Activated CD4-positive, alpha-beta memory T cell treated with anti-CD3 and anti-CD28 coated beads, Interleukin-2, amount 10 ng/mL, durations not matched to agents 7 days and 5 days (primary cell): ENCODE measurements at regions of chr19 and their contacts with region 1.

Region 1: DNA sequence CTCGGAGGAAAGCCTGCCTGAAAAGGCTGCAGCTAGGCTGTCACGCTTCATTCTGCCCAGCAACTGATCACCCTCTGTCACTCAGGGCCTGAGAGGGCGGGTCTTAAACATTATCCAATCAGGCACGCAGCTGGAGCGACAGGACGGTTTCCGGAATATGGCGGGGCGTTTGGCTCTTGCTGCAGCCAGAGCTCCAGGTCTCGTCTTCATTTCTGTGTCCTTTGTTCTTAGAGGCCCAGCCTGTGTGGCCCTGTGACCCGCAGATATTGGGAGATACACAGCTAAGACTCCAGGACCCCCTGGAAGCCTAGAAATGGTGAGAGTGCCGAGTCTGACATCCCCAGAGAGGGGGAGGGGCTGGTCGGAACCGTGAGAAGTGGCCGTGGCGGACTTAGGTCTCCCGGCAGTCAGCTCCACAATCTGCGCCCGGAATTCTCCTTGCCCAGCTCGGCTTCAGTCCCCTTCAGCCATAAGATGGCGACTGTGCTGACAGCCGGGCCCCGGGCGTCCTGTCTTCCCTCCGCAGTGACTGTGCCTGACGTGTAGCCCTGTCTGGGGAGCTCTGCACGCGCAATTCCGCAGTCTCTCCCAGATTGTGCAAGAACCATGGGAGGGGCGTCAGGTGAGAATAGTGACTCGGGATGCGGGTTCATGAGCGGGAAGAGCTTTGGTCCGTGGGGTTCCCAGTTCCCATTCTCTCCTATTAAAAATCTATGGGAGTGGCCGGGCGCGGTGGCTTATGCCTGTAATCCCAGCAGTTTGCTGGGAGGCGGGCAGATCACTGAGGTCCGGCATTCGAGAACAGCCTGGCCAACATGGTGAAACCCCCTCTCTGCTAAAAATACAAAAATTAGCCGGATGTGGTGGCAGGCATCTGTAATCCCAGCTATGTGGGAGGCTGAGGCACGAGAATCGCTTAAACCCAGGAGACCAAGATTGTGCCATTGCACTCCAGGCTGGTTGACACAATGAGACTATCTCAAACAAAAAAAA is at the start of gene ZNF429:
- DNase-seq: peak; percentile 93
- H3K4me3 Mint-ChIP-seq: peak within 1 kb of the TSS; percentile 100
- H3K27ac Mint-ChIP-seq: peak within 1 kb of the TSS; percentile 96
- H3K4me1 Mint-ChIP-seq: peaks cover 25% of the 10 kb centered on the region
- H3K27me3 Mint-ChIP-seq: no peaks in the 10 kb centered on the region
- total RNA-seq, gene ZNF429: 8.0 to 8.3 TPM

Region 2: GRCh38 chr19:20423381-20424197 is 1082.2 kb before region 1 on chr19:
- CTCF ChIA-PET with region 1: no interaction called
- POLR2A ChIA-PET with region 1: interaction called, 20 read pairs
- DNase-seq: peak; percentile 42
- H3K4me3 Mint-ChIP-seq: peak overlapping the region; percentile 97
- H3K27ac Mint-ChIP-seq: peak overlapping the region; percentile 97
- H3K4me1 Mint-ChIP-seq: peaks cover 13% of the 10 kb centered on the region
- H3K27me3 Mint-ChIP-seq: no peaks in the 10 kb centered on the region

Region 3: DNA sequence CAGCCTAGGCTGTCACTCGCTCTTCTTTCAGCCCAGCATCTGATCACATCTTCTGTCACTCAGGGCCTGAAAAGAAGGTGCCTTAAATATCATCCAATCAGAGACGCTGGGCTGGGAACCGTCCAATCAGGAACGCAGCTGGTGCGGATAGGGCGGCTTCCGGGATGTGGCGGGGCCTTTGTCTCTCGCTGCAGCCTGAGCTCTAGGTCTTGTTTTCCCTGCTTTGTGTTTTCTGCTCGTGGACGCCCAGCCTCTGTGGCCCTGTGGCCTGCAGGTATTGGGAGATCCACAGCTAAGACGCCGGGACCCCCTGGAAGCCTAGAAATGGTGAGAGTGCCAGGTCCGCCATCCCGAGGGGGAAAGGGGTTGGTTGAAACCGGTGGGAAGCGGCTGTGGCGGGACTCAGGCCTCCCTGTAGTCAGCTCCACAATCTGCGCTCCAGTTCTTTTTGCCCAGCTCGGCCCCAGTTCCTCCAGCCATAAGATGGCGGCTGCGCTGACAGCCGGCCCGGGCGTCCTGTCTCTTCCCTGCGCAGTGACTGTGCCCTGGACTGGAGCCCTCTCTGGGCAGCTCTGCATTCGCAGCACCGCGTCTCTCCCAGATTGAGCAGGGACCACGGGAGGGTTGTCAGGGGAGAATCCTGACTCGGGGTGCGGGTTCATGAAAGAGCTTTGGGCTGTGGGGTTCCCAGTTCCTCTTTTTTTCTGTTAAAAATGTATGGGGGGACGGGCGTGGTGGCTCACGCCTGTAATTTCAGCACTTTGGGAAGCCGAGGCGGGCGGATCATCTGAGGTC is 582.5 kb before region 1 on chr19 and contains the start of gene ZNF85:
- CTCF ChIA-PET with region 1: no interaction called
- POLR2A ChIA-PET with region 1: interaction called, 13 read pairs
- DNase-seq: peak; percentile 94
- H3K4me3 Mint-ChIP-seq: peak within 1 kb of the TSS; percentile 94
- H3K27ac Mint-ChIP-seq: peak within 1 kb of the TSS; percentile 94
- H3K4me1 Mint-ChIP-seq: peaks cover 19% of the 10 kb centered on the region
- H3K27me3 Mint-ChIP-seq: no peaks in the 10 kb centered on the region
- total RNA-seq, gene ZNF85: 16.4 to 17.2 TPM

Region 4: DNA sequence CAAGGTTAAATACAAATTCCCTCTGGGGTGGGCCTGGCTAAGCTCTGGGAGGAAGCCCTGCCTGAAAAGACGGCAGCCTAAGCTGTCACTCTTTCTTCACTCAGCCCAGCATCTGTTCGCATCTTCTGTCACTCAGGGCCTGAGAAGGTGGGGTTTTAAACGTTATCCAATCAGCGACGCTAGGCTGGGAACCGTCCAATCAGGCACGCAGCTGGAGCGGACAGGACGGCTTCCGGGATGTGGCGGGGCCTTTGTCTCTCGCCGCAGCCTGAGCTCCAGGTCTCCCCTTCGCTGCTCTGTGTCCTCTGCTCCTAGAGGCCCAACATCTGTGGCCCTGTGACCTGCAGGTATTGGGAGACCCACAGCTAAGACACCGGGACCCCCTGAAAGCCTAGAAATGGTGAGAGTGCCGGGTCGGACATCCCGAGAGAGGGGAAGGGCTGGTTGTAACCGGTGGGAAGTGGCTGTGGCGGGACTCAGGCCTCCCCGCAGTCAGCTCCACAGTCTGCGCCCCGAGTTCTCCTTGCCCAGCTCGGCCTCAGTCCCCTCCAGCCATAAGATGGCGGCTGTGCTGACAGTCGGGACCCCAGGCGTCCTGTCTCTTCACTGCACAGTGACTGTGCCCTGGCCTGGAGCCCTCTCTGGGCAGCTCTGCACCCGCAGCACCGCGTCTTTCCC is 363.8 kb before region 1 on chr19 and contains the start of gene ZNF431:
- CTCF ChIA-PET with region 1: interaction called, 3 read pairs
- POLR2A ChIA-PET with region 1: interaction called, 14 read pairs
- DNase-seq: peak; percentile 93
- H3K4me3 Mint-ChIP-seq: peak within 1 kb of the TSS; percentile 96
- H3K27ac Mint-ChIP-seq: peak within 1 kb of the TSS; percentile 91
- H3K4me1 Mint-ChIP-seq: peaks cover 22% of the 10 kb centered on the region
- H3K27me3 Mint-ChIP-seq: no peaks in the 10 kb centered on the region
- total RNA-seq, gene ZNF431: 16.1 to 20.5 TPM

Region 5: DNA sequence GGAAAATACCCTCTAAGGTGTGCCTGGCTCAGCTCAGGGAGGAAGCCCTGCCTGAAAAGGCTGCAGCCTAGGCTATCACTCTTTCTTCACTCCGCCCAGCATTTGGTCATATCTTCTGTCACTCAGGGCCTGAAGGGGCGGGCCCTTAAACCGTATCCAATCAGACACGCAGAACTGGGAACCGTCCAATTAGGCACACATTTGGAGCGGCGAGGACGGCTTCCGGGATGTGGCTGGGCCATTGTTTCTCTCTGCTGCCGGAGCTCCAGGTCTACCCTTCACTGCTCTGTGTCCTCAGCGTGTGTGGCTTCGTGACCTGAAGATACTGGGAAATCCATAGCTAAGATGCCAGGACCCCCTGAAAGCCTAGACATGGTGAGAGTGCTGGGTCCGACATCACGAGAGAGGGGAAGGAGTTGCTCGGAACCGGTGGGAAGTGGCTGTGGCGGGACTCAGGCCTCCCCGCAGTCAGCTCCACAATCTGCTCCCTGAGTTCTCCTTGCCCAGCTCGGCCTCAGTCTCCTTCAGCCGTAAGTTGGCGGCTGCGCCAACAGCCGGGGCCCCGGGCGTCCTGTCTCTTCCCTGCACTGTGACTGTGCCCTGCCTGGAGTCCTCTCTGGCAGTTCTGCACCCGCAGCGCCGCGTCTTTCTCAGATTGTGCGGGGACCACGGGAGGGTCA is 108.7 kb before region 1 on chr19 and contains the start of gene ZNF493:
- CTCF ChIA-PET with region 1: no interaction called
- POLR2A ChIA-PET with region 1: interaction called, 23 read pairs
- DNase-seq: peak; percentile 93
- H3K4me3 Mint-ChIP-seq: peak within 1 kb of the TSS; percentile 93
- H3K27ac Mint-ChIP-seq: peak within 1 kb of the TSS; percentile 81
- H3K4me1 Mint-ChIP-seq: peaks cover 22% of the 10 kb centered on the region
- H3K27me3 Mint-ChIP-seq: no peaks in the 10 kb centered on the region
- total RNA-seq, gene ZNF493: 15.7 to 17.5 TPM

Region 6: GRCh38 chr19:21451187-21451586 is 54.6 kb before region 1 on chr19:
- CTCF ChIA-PET with region 1: no interaction called
- POLR2A ChIA-PET with region 1: no interaction called
- DNase-seq: no peak
- H3K4me3 Mint-ChIP-seq: no peak overlapping the region
- H3K27ac Mint-ChIP-seq: no peak overlapping the region
- H3K4me1 Mint-ChIP-seq: no peaks in the 10 kb centered on the region
- H3K27me3 Mint-ChIP-seq: no peaks in the 10 kb centered on the region

Region 7: GRCh38 chr19:21568816-21569493 is 63.2 kb after region 1 on chr19:
- CTCF ChIA-PET with region 1: no interaction called
- POLR2A ChIA-PET with region 1: interaction called, 23 read pairs
- DNase-seq: peak; percentile 84
- H3K4me3 Mint-ChIP-seq: peak overlapping the region; percentile 91
- H3K27ac Mint-ChIP-seq: peak overlapping the region; percentile 83
- H3K4me1 Mint-ChIP-seq: peaks cover 16% of the 10 kb centered on the region
- H3K27me3 Mint-ChIP-seq: no peaks in the 10 kb centered on the region

Region 8: GRCh38 chr19:21851596-21852345 is 346.0 kb after region 1 on chr19:
- CTCF ChIA-PET with region 1: no interaction called
- POLR2A ChIA-PET with region 1: interaction called, 11 read pairs
- DNase-seq: peak; percentile 89
- H3K4me3 Mint-ChIP-seq: peak overlapping the region; percentile 89
- H3K27ac Mint-ChIP-seq: peak overlapping the region; percentile 83
- H3K4me1 Mint-ChIP-seq: peaks cover 16% of the 10 kb centered on the region
- H3K27me3 Mint-ChIP-seq: no peaks in the 10 kb centered on the region